Aorta (tissue), 5 donors: ENCODE measurements at regions of chr17 and their contacts with region 1.

Region 1: GRCh38 chr17:7214300-7215135 is 5.1 kb downstream of the DLG4 start:
- DNase-seq: peak; percentile 99 to 100
- ATAC-seq: peak; percentile 93
- H3K4me3 ChIP-seq: peak overlapping the region; percentile 2 to 6
- H3K27ac ChIP-seq: peak overlapping the region in 1 of 2 donors; percentile 20
- H3K4me1 ChIP-seq: no peaks in the 10 kb centered on the region
- H3K27me3 ChIP-seq: no peaks in the 10 kb centered on the region

Region 2: DNA sequence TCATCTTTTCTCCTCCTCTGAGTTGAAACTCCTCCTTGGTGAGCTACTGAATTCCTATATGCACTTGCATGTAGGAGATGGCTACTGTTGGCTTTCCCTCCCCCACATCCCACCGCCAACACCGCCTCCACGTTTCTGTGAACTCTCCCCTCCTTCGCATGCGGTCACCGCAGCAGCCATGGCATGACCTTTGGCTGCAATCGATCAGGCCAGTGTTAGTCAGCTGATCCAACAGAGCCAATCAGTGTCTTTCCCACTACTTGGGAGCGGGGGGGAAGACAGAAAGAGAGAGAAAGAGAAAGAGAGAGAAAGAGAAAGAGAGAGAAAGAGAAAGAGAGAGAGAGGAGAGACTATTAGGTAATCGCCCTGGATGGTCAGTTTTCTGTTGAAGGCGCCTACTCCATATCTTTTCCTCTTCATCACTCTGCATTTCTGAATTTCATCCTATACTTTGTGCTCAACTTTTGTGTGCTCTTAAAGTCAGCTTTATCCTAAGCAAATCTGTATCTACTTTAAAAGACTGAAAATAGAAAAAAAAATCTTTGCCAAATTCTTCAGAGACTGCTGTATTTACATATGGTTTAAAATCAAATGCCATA is 58.1 kb before region 1 on chr17:
- intact Hi-C with region 1: no loop called
- DNase-seq: peak in 1 of 2 donors; percentile 62
- ATAC-seq: no peak
- H3K4me3 ChIP-seq: no peak overlapping the region
- H3K27ac ChIP-seq: no peak overlapping the region
- H3K4me1 ChIP-seq: no peaks in the 10 kb centered on the region
- H3K27me3 ChIP-seq: no peaks in the 10 kb centered on the region

Region 3: GRCh38 chr17:7252176-7253043 is 37.9 kb after region 1 on chr17 and contains the start of gene ELP5:
- intact Hi-C with region 1: loop called in 1 of 2 experiments (anchors 1 kb)
- DNase-seq: peak; percentile 97 to 99
- ATAC-seq: peak; percentile 92
- H3K4me3 ChIP-seq: peak within 1 kb of the TSS; percentile 98 to 99
- H3K27ac ChIP-seq: peak within 1 kb of the TSS; percentile 71 to 94
- H3K4me1 ChIP-seq: peaks cover 0 to 2% of the 10 kb centered on the region in 2 donors
- H3K27me3 ChIP-seq: no peaks in the 10 kb centered on the region
- total RNA-seq, gene ELP5: 26.6 to 31.0 TPM